GM13976 (cell line): ENCODE measurements at regions of chr9 and their contacts with region 1.

Region 1: GRCh38 chr9:113657703-113658544 is 194.4 kb downstream of the RGS3 start:
- DNase-seq: peak; percentile 88
- CTCF ChIP-seq: peak; percentile 90

Region 2: GRCh38 chr9:113131689-113132151 is 526.2 kb before region 1 on chr9:
- in situ Hi-C with region 1: loop called (anchors 25 kb)
- DNase-seq: no peak
- CTCF ChIP-seq: no peak

Region 3: GRCh38 chr9:113261917-113262671 is 395.8 kb before region 1 on chr9:
- in situ Hi-C with region 1: no loop called
- DNase-seq: no peak
- CTCF ChIP-seq: no peak

Region 4: GRCh38 chr9:113446323-113446740 is 211.6 kb before region 1 on chr9:
- in situ Hi-C with region 1: loop called (anchors 5 kb)
- DNase-seq: peak; percentile 79
- CTCF ChIP-seq: peak; percentile 28

Region 5: GRCh38 chr9:113591001-113591898 is 66.7 kb before region 1 on chr9:
- in situ Hi-C with region 1: loop called (anchors 5 kb)
- DNase-seq: peak; percentile 81
- CTCF ChIP-seq: peak; percentile 81

Region 6: DNA sequence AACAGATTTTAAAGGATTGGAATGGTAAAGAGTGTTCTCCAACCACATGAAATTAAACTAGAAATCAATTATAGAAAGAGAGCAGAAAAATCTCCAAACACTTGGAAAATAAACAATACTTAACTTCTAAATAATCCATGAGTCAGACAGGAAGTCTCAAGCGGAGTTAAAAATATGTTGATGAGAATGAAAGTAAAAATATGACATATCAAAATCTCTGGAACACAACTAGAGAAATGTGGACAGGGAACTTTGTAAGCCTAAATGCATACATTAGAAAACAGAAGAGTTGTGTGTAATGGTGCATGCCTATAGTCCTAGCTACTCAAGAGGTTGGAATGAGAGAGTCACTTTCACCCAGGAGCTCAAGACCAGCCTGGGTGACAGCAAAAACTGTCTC is 170.3 kb after region 1 on chr9:
- in situ Hi-C with region 1: no loop called
- DNase-seq: no peak
- CTCF ChIP-seq: no peak

Region 7: DNA sequence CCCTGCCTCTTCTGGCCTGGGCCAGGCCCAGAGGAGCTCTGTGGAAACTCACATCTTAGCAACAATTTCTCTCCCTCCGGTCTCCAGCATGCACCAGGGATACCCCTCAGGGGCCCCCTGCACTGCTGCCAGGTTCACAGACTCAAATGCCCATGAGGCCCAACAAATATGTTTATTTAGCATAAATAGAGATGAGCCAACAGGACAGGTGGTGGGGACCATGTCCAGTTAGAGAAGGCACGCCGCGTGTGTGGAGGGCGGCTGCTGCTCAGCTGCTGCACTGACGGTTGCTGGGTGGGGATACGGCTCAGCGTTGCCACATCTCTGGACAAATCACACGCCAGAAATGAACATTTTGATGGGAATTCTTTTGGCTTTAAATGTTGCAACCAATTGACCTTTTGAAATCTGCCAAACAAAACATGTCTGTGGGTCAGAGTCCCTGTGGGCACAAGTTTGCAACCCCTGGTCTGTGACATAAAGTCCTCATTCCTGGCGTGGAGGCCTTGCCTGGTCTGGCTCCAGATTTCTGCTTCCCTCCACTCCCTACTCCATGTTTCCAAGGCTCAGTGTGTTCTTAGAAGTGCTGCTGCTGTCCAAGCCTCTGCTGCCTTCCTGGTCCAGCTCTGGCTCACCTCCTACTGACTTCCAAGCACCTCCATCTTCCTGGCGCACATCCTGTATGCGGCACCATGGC is 331.2 kb after region 1 on chr9:
- in situ Hi-C with region 1: no loop called
- DNase-seq: no peak
- CTCF ChIP-seq: no peak